CD4-positive, alpha-beta memory T cell (primary cell): ENCODE measurements at regions of chr2 and their contacts with region 1.

Region 1: DNA sequence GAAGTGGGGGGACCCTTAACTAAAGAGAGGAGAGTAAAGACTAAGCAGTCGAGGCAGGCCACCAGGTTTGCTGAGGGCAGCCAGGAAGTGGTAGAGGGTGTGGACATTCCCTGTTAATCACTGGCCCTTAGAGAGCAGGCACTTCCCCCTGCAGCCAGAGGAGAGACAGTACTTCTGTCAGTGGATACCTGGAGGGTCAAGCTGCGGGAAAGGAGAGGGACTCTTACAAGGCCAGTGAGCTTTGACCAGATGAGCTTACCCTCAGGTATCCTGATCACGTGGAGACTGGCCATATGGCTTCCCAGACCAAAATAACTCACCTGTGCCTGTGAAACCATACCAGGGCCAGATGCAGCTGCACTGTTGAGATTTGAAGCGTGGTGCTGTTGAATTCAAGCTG is 28.6 kb downstream of the ITGA6 start:
- DNase-seq: no peak
- H3K4me3 ChIP-seq: no peak overlapping the region
- H3K4me3 Mint-ChIP-seq: no peak overlapping the region
- H3K27ac ChIP-seq: no peak overlapping the region
- H3K27ac Mint-ChIP-seq: peak overlapping the region in 6 of 7 donors; percentile 47 to 90 (median 68)
- H3K4me1 ChIP-seq: peaks cover 81% of the 10 kb centered on the region
- H3K4me1 Mint-ChIP-seq: peaks cover 62 to 91% (median 77%) of the 10 kb centered on the region in 4 donors
- H3K27me3 ChIP-seq: no peaks in the 10 kb centered on the region
- H3K27me3 Mint-ChIP-seq: no peaks in the 10 kb centered on the region

Region 2: GRCh38 chr2:172084734-172085459 is 371.1 kb before region 1 on chr2:
- CTCF ChIA-PET with region 1: no interaction called
- POLR2A ChIA-PET with region 1: no interaction called
- intact Hi-C with region 1: no loop called
- DNase-seq: peak in 4 of 5 donors; percentile 48 to 54 (median 51)
- H3K4me3 ChIP-seq: peak overlapping the region; percentile 28 to 42
- H3K4me3 Mint-ChIP-seq: peak overlapping the region; percentile 73 to 89 (median 78)
- H3K27ac ChIP-seq: no peak overlapping the region
- H3K27ac Mint-ChIP-seq: peak overlapping the region in 6 of 7 donors; percentile 24 to 99 (median 86)
- H3K4me1 ChIP-seq: peaks cover 67% of the 10 kb centered on the region
- H3K4me1 Mint-ChIP-seq: peaks cover 27 to 72% (median 58%) of the 10 kb centered on the region in 4 donors
- H3K27me3 ChIP-seq: peaks cover 99% of the 10 kb centered on the region
- H3K27me3 Mint-ChIP-seq: peaks cover 72 to 82% of the 10 kb centered on the region in 2 donors

Region 3: GRCh38 chr2:172427256-172427989 is 28.6 kb before region 1 on chr2 and contains the start of gene ITGA6:
- CTCF ChIA-PET with region 1: interaction called, 1,033 read pairs
- POLR2A ChIA-PET with region 1: interaction called, 449 read pairs
- intact Hi-C with region 1: no loop called
- DNase-seq: peak; percentile 75 to 84 (median 78)
- H3K4me3 ChIP-seq: peak within 1 kb of the TSS; percentile 31 to 76
- H3K4me3 Mint-ChIP-seq: peak within 1 kb of the TSS; percentile 88 to 97 (median 94)
- H3K27ac ChIP-seq: peak within 1 kb of the TSS; percentile 66
- H3K27ac Mint-ChIP-seq: peak within 1 kb of the TSS; percentile 92 to 95 (median 93)
- H3K4me1 ChIP-seq: peaks cover 65% of the 10 kb centered on the region
- H3K4me1 Mint-ChIP-seq: peaks cover 30 to 52% (median 46%) of the 10 kb centered on the region in 4 donors
- H3K27me3 ChIP-seq: no peaks in the 10 kb centered on the region
- H3K27me3 Mint-ChIP-seq: no peaks in the 10 kb centered on the region
- total RNA-seq, gene ITGA6: 69.1 to 73.6 TPM

Region 4: DNA sequence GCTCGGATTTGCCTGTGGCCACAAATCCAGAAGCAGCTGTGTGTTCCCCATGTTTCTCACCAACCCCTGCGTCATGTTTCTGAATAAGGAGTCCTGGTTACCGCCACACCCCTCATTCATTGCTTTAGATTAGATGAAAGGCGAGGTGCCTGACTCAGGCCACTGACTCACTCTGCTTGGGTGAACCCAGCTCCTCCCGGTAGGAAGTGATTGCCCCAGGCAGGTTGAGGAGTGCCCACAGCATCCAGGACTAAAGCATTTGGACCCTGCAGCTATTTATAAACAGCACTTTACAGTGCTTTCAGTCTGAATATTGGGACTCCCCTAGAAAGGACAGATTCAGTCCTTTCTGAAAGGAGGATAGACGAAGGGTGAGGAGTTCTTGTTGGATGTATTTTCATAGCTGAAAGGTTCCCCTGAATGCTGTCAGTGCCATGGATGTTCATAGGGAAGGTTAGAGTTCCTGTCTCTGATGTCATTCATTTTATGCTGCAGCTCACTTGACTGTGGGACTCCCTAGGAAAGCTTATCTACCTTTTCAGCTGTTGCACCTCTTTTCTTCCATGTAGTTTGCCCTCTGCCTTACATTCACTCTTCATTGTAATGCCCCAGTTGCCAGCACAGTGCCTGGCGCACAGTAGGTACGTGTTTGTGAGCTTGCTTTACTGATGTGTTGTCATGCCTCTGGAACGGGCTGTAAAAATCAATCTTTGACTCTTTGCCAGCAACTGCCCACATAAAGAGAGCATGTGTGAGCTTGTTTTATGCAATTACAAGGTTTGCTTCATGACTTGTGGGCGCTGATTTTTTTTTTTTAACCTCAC is 13.7 kb before region 1 on chr2:
- CTCF ChIA-PET with region 1: interaction called, 1,033 read pairs
- POLR2A ChIA-PET with region 1: interaction called, 449 read pairs
- intact Hi-C with region 1: no loop called
- DNase-seq: peak in 1 of 5 donors; percentile 81
- H3K4me3 ChIP-seq: peak overlapping the region in 1 of 2 donors; percentile 39
- H3K4me3 Mint-ChIP-seq: peak overlapping the region; percentile 78 to 95 (median 84)
- H3K27ac ChIP-seq: no peak overlapping the region
- H3K27ac Mint-ChIP-seq: peak overlapping the region; percentile 75 to 89 (median 89)
- H3K4me1 ChIP-seq: peaks cover 84% of the 10 kb centered on the region
- H3K4me1 Mint-ChIP-seq: peaks cover 21 to 75% (median 53%) of the 10 kb centered on the region in 4 donors
- H3K27me3 ChIP-seq: no peaks in the 10 kb centered on the region
- H3K27me3 Mint-ChIP-seq: no peaks in the 10 kb centered on the region